MCF 10A (cell line): ENCODE measurements at regions of chr1 and their contacts with region 1.

Region 1: DNA sequence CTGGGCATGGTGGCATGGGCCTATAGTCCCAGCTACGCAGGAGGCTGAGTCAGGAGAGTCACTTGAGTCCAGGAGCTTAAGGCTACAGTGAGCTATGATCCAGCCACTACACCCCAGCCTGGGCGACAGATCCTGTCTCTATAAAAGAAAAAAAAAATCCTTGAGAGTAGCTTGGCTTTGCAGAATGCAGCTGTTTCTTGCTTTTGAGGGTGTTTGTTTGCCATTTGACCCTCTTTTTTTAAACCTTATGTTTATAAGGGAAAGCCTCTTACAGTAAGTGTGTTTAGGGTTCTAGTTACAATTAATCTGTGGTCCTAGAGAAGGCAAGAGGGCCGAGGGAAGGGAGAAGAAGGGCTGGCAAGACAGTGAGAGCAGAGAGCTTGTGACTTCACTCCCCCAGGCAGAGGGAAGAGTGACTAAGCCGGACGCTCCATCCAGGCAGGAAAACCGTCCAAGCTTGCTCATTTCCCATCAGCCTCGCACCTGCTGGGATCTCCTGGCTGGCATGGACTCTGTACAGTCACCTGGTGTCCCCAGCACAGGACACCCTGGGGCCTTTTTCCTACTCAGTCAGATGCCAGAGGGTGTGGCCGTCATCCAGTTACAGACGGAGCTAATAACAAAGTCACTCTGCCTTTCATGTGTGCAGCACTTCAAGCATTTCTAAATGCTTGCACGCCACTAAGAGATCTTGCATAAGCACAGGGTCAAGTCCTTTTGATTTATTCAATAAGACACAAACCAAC is 55.5 kb upstream of the PSEN2 start:
- DNase-seq: peak; percentile 100
- H3K4me3 Mint-ChIP-seq: no peak overlapping the region
- H3K27ac Mint-ChIP-seq: peak overlapping the region; percentile 89
- H3K4me1 Mint-ChIP-seq: peaks cover 18% of the 10 kb centered on the region
- H3K27me3 Mint-ChIP-seq: no peaks in the 10 kb centered on the region
- CTCF ChIP-seq: no peak

Region 2: DNA sequence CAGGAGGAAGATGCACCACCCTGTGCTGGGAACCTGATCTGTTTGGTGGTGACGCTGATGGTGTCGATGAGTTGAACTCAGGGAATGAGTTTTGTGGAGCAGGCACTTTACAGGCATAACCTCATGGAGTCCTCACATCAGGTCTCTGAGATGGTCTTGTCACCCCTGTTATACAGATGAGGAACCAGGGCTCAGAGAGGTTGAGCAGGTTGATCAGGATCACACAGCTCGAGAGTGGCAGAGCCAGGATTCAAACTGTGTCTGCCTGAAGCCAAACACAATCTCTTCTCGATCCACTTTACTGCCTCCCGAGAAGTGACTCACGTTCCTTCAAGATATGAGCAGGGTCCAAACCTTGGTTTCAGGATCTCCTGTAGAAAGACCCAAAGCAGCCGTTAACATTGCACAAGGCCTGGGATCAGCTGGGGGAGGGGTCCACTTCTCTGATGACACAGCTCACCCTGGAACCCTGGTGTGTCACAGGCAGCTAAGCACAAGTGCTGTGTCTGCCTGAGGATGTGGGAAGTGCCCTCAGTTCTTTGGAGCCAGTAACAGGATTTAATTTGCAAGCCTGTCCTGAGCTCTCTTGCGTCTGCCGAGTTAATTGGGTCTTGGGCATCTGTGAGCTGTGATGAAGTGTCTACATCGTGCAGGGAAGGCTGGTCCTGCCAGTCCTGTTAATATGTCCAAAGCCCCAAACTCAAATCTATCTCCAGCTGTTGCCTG is 331.8 kb before region 1 on chr1:
- CTCF ChIA-PET with region 1: no interaction called
- POLR2A ChIA-PET with region 1: no interaction called
- intact Hi-C with region 1: no loop called
- DNase-seq: peak; percentile 32
- H3K4me3 Mint-ChIP-seq: no peak overlapping the region
- H3K27ac Mint-ChIP-seq: no peak overlapping the region
- H3K4me1 Mint-ChIP-seq: peaks cover 6% of the 10 kb centered on the region
- H3K27me3 Mint-ChIP-seq: no peaks in the 10 kb centered on the region
- CTCF ChIP-seq: no peak

Region 3: GRCh38 chr1:226626577-226626956 is 188.4 kb before region 1 on chr1:
- CTCF ChIA-PET with region 1: interaction called, 342 read pairs
- POLR2A ChIA-PET with region 1: interaction called, 5 read pairs
- intact Hi-C with region 1: no loop called
- DNase-seq: peak; percentile 85
- H3K4me3 Mint-ChIP-seq: no peak overlapping the region
- H3K27ac Mint-ChIP-seq: peak overlapping the region; percentile 36
- H3K4me1 Mint-ChIP-seq: peaks cover 22% of the 10 kb centered on the region
- H3K27me3 Mint-ChIP-seq: no peaks in the 10 kb centered on the region
- CTCF ChIP-seq: peak; percentile 99

Region 4: GRCh38 chr1:226679853-226680516 is 134.9 kb before region 1 on chr1:
- CTCF ChIA-PET with region 1: interaction called, 3 read pairs
- POLR2A ChIA-PET with region 1: interaction called, 13 read pairs
- intact Hi-C with region 1: no loop called
- DNase-seq: no peak
- H3K4me3 Mint-ChIP-seq: no peak overlapping the region
- H3K27ac Mint-ChIP-seq: no peak overlapping the region
- H3K4me1 Mint-ChIP-seq: peaks cover 24% of the 10 kb centered on the region
- H3K27me3 Mint-ChIP-seq: no peaks in the 10 kb centered on the region
- CTCF ChIP-seq: no peak

Region 5: GRCh38 chr1:226736908-226737818 is 77.8 kb before region 1 on chr1:
- CTCF ChIA-PET with region 1: interaction called, 4 read pairs
- POLR2A ChIA-PET with region 1: interaction called, 39 read pairs
- intact Hi-C with region 1: no loop called
- DNase-seq: no peak
- H3K4me3 Mint-ChIP-seq: peak overlapping the region; percentile 82
- H3K27ac Mint-ChIP-seq: peak overlapping the region; percentile 33
- H3K4me1 Mint-ChIP-seq: peaks cover 28% of the 10 kb centered on the region
- H3K27me3 Mint-ChIP-seq: no peaks in the 10 kb centered on the region
- CTCF ChIP-seq: no peak

Region 6: DNA sequence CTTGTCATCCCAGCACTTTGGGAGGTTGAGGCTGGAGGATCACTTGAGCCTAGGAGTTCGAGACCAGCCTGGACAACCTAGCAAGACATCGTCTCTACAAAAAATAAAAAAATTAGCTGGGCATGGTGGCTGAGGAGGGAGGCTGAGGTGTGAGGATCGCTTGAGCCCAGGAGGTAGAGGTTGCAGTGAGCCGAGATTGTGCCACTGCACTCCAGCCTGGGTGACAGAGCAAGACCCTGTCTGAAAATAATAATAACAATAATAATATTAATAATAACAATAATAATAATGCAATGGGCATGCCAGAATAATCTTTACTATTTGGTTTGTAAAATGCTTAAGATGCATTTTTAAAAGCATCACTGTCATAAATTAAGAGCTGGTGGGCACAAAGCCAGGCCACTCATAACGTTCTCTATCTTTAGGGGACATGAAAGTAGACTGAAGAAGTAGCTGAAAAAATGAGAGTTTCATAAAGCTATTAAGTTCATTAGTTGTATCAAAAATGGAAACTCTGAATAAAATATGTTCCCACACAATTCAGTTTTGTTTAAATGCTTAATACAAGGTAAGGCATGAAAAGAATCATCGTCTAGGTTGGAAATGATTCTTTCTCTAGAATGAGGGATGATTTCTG is 24.3 kb before region 1 on chr1:
- CTCF ChIA-PET with region 1: interaction called, 4 read pairs
- POLR2A ChIA-PET with region 1: interaction called, 10 read pairs
- intact Hi-C with region 1: no loop called
- DNase-seq: no peak
- H3K4me3 Mint-ChIP-seq: no peak overlapping the region
- H3K27ac Mint-ChIP-seq: no peak overlapping the region
- H3K4me1 Mint-ChIP-seq: no peaks in the 10 kb centered on the region
- H3K27me3 Mint-ChIP-seq: peaks cover 14% of the 10 kb centered on the region
- CTCF ChIP-seq: no peak

Region 7: GRCh38 chr1:226870401-226871279 is 55.7 kb after region 1 on chr1 and contains the start of gene PSEN2:
- CTCF ChIA-PET with region 1: interaction called, 4 read pairs
- POLR2A ChIA-PET with region 1: interaction called, 12 read pairs
- intact Hi-C with region 1: no loop called
- DNase-seq: peak; percentile 74
- H3K4me3 Mint-ChIP-seq: peak within 1 kb of the TSS; percentile 75
- H3K27ac Mint-ChIP-seq: peak within 1 kb of the TSS; percentile 79
- H3K4me1 Mint-ChIP-seq: peaks cover 45% of the 10 kb centered on the region
- H3K27me3 Mint-ChIP-seq: no peaks in the 10 kb centered on the region
- CTCF ChIP-seq: peak; percentile 53
- total RNA-seq, gene PSEN2: 31.3 and 31.8 TPM in 2 replicates